ENCODE measurements at regions of chr10 and their contacts with region 1.

Region 1: DNA sequence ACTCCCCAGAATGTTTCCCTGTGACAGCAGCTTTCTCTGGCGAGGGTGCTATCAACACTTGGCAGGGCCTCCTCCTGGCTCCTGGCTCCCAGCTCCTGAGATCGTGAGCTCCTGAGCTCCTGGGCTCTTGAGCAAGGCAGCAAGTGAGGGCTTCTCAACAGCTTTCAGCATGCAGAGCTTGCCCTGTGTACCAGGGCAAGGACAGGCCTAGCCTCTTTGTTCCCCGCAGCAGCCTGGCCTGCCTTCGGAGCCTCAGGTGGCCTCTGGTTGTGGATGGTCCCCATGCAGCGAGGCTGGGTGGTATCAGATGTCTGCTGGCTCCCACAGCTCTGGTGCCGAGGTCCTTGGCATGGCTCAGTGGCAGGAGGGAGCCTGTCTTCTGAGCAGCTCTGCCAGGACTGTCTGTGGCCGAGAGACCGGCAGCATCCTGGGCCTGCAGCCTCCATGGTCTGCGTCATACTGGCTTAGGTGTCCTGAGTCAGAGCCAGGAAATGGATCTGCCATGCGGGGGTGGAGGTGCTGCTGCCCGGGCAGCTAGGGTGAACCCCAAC is 44.2 kb downstream of the ZMIZ1 start:
- DNase-seq: no peak
- ATAC-seq: peak; percentile 70

Region 2: DNA sequence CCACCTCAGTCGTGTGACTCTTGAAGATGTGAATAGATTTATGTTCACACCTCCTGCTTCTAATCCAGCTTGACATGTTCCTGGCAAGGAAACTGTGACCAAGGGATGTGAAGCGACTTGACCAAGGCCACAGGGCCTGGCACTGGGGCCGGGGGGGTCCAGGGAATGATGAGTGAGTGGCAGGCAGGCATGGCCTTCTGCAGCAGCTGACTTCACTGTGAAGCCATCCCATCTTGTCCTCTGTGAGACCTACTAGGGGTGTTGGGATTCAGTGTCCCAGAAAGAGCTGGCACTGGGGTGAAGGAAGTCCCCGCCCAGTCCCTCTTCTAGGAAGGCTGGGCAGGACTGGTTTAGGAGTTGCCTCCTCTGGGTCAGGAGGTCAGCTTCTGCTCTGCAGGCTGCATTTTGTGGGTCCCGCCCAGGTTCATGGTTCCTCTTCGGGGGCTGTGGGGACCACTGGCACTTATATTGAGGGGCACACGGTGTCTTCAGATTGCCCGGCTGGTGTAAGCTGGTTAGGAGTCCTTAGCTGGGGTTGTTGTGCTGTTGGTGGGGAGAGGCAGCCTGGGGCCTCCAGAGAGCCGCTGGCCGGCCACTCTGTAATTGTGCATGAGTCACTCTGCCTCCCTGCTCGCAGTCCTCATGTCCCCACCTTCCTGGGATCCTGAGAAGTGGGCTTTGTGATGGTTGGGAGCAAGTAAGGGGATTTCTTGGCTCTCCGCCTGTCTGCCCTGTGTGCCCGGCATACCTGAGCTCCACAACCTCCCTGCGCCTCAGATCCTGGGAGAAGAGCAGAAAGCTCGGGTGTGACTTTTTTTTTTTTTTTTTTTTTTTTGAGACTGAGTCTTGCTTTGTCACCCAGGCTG is 33.2 kb before region 1 on chr10:
- intact Hi-C with region 1: loop called (anchors 2 kb)
- DNase-seq: peak; percentile 73
- ATAC-seq: peak; percentile 58

Region 3: DNA sequence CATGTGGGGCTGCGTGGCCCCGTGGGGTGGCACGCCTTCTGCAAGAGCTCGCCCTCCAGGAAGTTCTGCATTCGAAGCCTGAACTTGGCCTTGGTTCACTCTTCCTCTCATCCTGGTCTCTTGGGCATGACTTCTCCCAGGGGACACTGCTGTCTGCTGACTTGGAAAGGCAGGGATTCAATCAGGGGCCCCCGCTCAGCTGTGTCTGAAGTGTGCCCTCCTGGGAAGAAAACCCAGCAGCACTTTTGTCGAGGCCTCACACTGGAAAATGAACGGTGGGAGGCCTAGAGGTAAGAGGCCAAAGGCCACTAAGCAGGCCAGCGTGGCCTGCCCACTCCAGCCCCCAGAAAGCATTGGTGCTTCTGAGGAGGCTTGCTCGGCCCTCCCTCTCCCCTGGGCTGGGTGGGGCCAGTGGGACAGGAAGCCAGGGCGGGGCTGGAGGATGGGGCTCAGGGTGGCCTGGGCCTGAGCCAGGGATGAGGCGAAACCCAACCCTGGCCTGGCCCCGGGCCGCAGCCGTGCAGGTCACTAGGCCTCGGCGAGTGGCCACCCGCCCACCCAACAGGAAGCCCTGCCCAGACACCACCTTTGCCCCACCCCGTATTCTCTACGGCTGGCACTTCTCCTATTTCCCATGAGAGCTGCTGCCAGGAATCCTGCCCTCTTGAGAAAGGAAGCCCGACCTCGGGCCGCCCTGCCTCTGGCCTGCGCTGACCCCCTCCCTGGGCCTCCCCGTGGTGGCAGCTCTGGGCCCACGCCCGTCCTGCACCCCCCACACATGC is 36.9 kb after region 1 on chr10:
- intact Hi-C with region 1: loop called (anchors 5 kb)
- DNase-seq: peak; percentile 94
- ATAC-seq: peak; percentile 56